PC-3 (cell line): ENCODE measurements at regions of chr3 and their contacts with region 1.

Region 1: GRCh38 chr3:30401971-30402370 is 204.4 kb upstream of the TGFBR2 start:
- DNase-seq: no peak
- ATAC-seq: no peak
- H3K4me3 ChIP-seq: no peak overlapping the region
- H3K27ac ChIP-seq: no peak overlapping the region
- H3K4me1 ChIP-seq: peaks cover 11% of the 10 kb centered on the region
- H3K27me3 ChIP-seq: no peaks in the 10 kb centered on the region
- CTCF ChIP-seq: no peak

Region 2: DNA sequence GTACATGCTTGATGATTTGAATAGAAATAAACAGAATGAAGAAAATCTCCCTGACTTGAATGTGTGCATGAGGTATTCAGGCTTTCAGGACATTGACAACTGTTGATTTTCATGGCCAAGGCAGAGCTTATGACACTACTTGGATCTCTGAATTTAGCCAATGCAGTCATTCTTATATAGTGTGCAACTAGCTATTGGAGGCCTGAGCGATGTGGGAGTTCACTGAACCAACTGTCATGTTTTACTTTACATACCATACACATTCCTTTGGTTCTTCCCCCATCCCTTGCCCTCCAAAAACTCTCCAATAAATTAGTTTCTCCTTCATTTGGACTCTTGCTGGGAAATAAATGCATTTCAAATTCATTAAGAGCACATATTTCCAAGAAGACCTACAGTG is 660.7 kb before region 1 on chr3:
- CTCF ChIA-PET with region 1: no interaction called
- POLR2A ChIA-PET with region 1: no interaction called
- intact Hi-C with region 1: loop called (anchors 5 kb)
- DNase-seq: no peak
- ATAC-seq: no peak
- H3K4me3 ChIP-seq: no peak overlapping the region
- H3K27ac ChIP-seq: no peak overlapping the region
- H3K4me1 ChIP-seq: no peaks in the 10 kb centered on the region
- H3K27me3 ChIP-seq: no peaks in the 10 kb centered on the region
- CTCF ChIP-seq: no peak